Tibial artery (tissue), 4 donors: ENCODE measurements at regions of chr2 and their contacts with region 1.

Region 1: GRCh38 chr2:225668606-225669266 is 269.2 kb downstream of the NYAP2 start:
- DNase-seq: no peak
- H3K4me3 ChIP-seq: no peak overlapping the region
- H3K27ac ChIP-seq: no peak overlapping the region
- H3K4me1 ChIP-seq: no peaks in the 10 kb centered on the region
- H3K27me3 ChIP-seq: no peaks in the 10 kb centered on the region
- CTCF ChIP-seq: peak; percentile 54 to 57

Region 2: GRCh38 chr2:225797394-225797793 is 128.7 kb after region 1 on chr2:
- intact Hi-C with region 1: loop called (anchors 5 kb)
- DNase-seq: no peak
- H3K4me3 ChIP-seq: no peak overlapping the region
- H3K27ac ChIP-seq: no peak overlapping the region
- H3K4me1 ChIP-seq: no peaks in the 10 kb centered on the region
- H3K27me3 ChIP-seq: no peaks in the 10 kb centered on the region
- CTCF ChIP-seq: peak; percentile 53 to 65

Region 3: GRCh38 chr2:226800941-226801784 is 1132.4 kb after region 1 on chr2:
- intact Hi-C with region 1: loop called (anchors 5 kb)
- DNase-seq: peak; percentile 59 to 92
- H3K4me3 ChIP-seq: peak overlapping the region; percentile 85 to 92
- H3K27ac ChIP-seq: peak overlapping the region; percentile 88 to 97
- H3K4me1 ChIP-seq: peaks cover 0 to 47% (median 31%) of the 10 kb centered on the region in 4 donors
- H3K27me3 ChIP-seq: no peaks in the 10 kb centered on the region
- CTCF ChIP-seq: no peak